Sciatic nerve (tissue), 2 donors: ENCODE measurements at regions of chr2 and their contacts with region 1.

Region 1: GRCh38 chr2:85888684-85889626 is at the start of gene ST3GAL5:
- DNase-seq: peak; percentile 97
- ATAC-seq: peak; percentile 81
- total RNA-seq, gene ST3GAL5: 46.1 TPM

Region 2: GRCh38 chr2:85830645-85831044 is 58.3 kb before region 1 on chr2:
- intact Hi-C with region 1: no loop called
- DNase-seq: no peak
- ATAC-seq: no peak

Region 3: GRCh38 chr2:85999061-85999831 is 110.3 kb after region 1 on chr2:
- intact Hi-C with region 1: loop called (anchors 10 kb)
- DNase-seq: peak; percentile 55
- ATAC-seq: peak; percentile 15